MCF 10A (cell line): ENCODE measurements at regions of chr12 and their contacts with region 1.

Region 1: GRCh38 chr12:9813821-9814809 is 13.2 kb upstream of the KLRF1 start:
- DNase-seq: peak; percentile 69
- H3K4me3 Mint-ChIP-seq: peak overlapping the region; percentile 57
- H3K27ac Mint-ChIP-seq: no peak overlapping the region
- H3K4me1 Mint-ChIP-seq: no peaks in the 10 kb centered on the region
- H3K27me3 Mint-ChIP-seq: no peaks in the 10 kb centered on the region
- CTCF ChIP-seq: peak; percentile 86

Region 2: DNA sequence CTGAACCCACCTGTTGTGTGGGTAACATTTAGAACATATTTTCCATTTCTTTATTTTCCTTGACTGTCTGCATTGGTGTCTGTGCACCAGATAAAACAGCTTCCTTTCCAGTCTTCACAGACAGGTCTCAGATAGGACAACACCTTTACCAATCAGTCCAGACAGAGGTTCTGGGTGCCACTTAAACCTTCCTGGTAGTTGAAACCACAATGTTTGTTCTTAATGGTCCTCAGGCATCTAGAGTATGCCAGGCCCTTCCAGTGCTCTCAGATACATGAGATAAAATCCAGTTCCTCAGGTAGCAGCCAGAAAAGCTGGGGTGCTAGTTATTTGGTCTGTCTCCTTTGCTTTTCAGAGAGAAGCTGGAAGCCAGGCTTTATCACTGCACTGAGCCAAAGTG is 151.6 kb before region 1 on chr12:
- CTCF ChIA-PET with region 1: no interaction called
- POLR2A ChIA-PET with region 1: no interaction called
- intact Hi-C with region 1: no loop called
- DNase-seq: no peak
- H3K4me3 Mint-ChIP-seq: no peak overlapping the region
- H3K27ac Mint-ChIP-seq: no peak overlapping the region
- H3K4me1 Mint-ChIP-seq: peaks cover 5% of the 10 kb centered on the region
- H3K27me3 Mint-ChIP-seq: no peaks in the 10 kb centered on the region
- CTCF ChIP-seq: no peak

Region 3: GRCh38 chr12:9741726-9742125 is 72.4 kb before region 1 on chr12:
- CTCF ChIA-PET with region 1: interaction called, 4 read pairs
- POLR2A ChIA-PET with region 1: no interaction called
- intact Hi-C with region 1: loop called (anchors 5 kb)
- DNase-seq: no peak
- H3K4me3 Mint-ChIP-seq: no peak overlapping the region
- H3K27ac Mint-ChIP-seq: no peak overlapping the region
- H3K4me1 Mint-ChIP-seq: peaks cover 8% of the 10 kb centered on the region
- H3K27me3 Mint-ChIP-seq: no peaks in the 10 kb centered on the region
- CTCF ChIP-seq: no peak

Region 4: DNA sequence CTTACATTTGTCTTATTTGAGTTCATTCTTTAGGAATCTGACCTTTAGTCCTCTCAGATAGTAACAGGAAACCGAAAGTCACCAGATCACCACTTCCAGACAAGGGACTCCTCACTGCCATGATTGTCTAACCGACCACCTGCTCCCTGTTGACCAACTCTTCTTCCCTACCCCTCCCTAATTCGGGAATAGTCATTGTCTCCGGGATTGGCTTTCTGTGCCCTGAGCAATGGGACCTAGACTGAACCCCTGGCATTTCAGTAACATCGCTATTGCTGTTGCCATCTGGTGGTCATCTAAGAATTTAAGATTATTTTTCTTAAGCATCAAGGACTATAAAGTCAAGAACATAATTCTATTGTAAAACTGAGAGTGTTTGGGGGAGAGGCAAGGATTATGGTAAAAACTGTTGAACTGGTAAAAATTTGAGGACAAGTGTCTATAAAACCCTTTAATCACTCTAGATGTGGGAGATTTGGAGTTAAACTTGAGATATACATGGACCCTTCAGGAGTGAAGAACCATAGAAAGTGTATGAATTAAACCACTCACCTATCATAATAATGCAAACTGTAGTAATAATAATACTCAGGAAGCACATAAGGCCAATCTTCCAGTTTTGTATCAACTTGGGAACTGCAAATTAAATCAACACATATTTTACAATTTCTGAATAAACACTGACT is 111.7 kb after region 1 on chr12:
- CTCF ChIA-PET with region 1: interaction called, 45 read pairs
- POLR2A ChIA-PET with region 1: no interaction called
- intact Hi-C with region 1: loop called (anchors 1 kb)
- DNase-seq: peak; percentile 57
- H3K4me3 Mint-ChIP-seq: peak overlapping the region; percentile 33
- H3K27ac Mint-ChIP-seq: no peak overlapping the region
- H3K4me1 Mint-ChIP-seq: peaks cover 6% of the 10 kb centered on the region
- H3K27me3 Mint-ChIP-seq: no peaks in the 10 kb centered on the region
- CTCF ChIP-seq: peak; percentile 46

Region 5: DNA sequence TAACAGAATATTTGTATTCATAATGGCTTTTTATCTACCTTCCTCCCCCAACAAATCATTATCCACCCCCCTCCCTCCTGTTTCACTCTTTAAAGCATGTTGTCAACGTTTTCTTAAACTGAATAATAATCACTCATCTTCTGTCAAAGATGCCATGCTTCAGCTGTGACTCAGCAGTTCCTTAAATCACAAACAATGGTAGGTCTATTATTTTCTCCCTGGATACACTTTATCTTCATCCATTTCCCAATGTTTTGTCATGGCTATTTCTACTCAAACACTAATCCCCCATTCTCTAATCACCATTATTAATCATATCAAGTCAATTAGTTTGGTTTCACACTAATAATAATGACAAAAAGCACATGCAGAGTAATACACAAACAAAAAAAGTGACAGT is 202.8 kb after region 1 on chr12:
- CTCF ChIA-PET with region 1: interaction called, 6 read pairs
- POLR2A ChIA-PET with region 1: no interaction called
- intact Hi-C with region 1: loop called (anchors 10 kb)
- DNase-seq: peak; percentile 37
- H3K4me3 Mint-ChIP-seq: no peak overlapping the region
- H3K27ac Mint-ChIP-seq: peak overlapping the region; percentile 2
- H3K4me1 Mint-ChIP-seq: peaks cover 8% of the 10 kb centered on the region
- H3K27me3 Mint-ChIP-seq: no peaks in the 10 kb centered on the region
- CTCF ChIP-seq: no peak